HEK293 (cell line): ENCODE measurements at regions of chr9 and their contacts with region 1.

Region 1: DNA sequence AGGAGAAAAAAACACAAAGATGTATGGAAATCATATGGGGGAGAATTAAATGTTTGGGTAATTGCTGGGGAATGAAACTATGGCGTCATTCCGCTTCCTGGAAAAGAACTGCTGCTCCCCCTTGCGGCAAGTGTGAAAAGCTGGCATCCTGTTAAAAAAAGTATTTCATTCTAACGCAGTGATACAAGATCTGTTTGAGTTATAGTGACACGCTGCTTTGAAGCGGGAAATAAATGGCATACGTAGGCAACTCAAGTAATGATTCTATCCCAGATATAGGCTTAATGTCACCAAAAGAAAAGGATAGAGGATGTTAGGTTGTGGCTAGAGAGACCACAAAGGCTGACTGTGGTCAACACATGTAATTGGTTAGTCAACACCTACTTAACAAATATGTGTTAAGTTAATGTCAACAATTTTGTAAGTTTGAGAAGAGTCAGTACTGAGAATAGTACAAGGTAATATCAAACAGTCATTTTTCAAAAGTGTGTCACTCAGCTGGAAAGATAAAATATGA is 70.2 kb upstream of the ALDH1A1 start:
- H3K4me3 ChIP-seq: no peak overlapping the region
- H3K27ac ChIP-seq: no peak overlapping the region
- H3K4me1 ChIP-seq: no peaks in the 10 kb centered on the region
- CTCF ChIP-seq: 0 out of 2 replicates have a peak, but pooled peaks have one; percentile 18

Region 2: GRCh38 chr9:72280913-72281500 is 742.1 kb before region 1 on chr9:
- CTCF ChIA-PET with region 1: interaction called, 10 read pairs
- POLR2A ChIA-PET with region 1: no interaction called
- H3K4me3 ChIP-seq: no peak overlapping the region
- H3K27ac ChIP-seq: no peak overlapping the region
- H3K4me1 ChIP-seq: no peaks in the 10 kb centered on the region
- CTCF ChIP-seq: peak; percentile 59; the same call in 1 of the 2 replicates

Region 3: GRCh38 chr9:72856972-72857623 is 166.0 kb before region 1 on chr9:
- CTCF ChIA-PET with region 1: interaction called, 68 read pairs
- POLR2A ChIA-PET with region 1: no interaction called
- H3K4me3 ChIP-seq: no peak overlapping the region
- H3K27ac ChIP-seq: no peak overlapping the region
- H3K4me1 ChIP-seq: no peaks in the 10 kb centered on the region
- CTCF ChIP-seq: no peak

Region 4: DNA sequence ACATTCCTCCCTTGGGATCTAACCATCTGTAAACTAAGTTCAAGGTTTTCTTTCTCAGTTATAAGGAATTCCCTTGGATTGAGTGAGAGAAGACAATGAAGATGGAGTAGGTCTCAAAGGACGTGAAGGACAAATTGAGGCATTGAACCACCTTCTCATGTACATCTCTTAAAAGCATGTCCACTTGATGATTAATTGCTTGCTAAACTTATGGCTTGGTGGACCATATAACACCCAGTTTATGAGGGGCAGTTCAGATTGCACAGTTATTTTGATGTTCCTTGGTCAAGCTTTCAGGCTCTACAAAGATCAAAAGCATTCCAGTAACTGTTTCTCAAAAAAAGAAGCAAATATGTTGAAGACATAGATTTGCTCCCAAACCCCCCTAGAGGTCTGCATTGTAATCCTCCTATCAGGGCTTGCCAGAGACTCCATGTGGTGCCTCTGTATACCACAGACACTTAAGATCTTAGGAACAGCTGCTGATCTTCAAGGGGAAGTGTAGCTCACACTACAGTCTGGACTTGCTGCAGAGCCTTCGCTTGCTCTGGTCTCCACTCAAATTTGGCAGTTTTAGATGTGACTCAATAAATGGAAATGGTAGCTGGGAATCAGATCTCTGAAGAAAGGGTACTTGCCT is 13.3 kb before region 1 on chr9:
- CTCF ChIA-PET with region 1: interaction called, 25 read pairs
- POLR2A ChIA-PET with region 1: no interaction called
- H3K4me3 ChIP-seq: no peak overlapping the region
- H3K27ac ChIP-seq: no peak overlapping the region
- H3K4me1 ChIP-seq: no peaks in the 10 kb centered on the region
- CTCF ChIP-seq: no peak

Region 5: GRCh38 chr9:73050065-73050816 is 27.2 kb after region 1 on chr9:
- CTCF ChIA-PET with region 1: interaction called, 14 read pairs
- POLR2A ChIA-PET with region 1: no interaction called
- H3K4me3 ChIP-seq: no peak overlapping the region
- H3K27ac ChIP-seq: no peak overlapping the region
- H3K4me1 ChIP-seq: no peaks in the 10 kb centered on the region
- CTCF ChIP-seq: no peak